Activated CD4-positive, alpha-beta T cell treated with anti-CD3 and anti-CD28 coated beads for 36 hours (primary cell): ENCODE measurements at regions of chr20 and their contacts with region 1.

Region 1: GRCh38 chr20:43691928-43692524 is 25.1 kb downstream of the MYBL2 start:
- DNase-seq: peak; percentile 81
- ATAC-seq: peak; percentile 85
- H3K4me3 Mint-ChIP-seq: no peak overlapping the region
- H3K27ac Mint-ChIP-seq: no peak overlapping the region
- H3K4me1 Mint-ChIP-seq: peaks cover 9% of the 10 kb centered on the region
- H3K27me3 Mint-ChIP-seq: no peaks in the 10 kb centered on the region

Region 2: DNA sequence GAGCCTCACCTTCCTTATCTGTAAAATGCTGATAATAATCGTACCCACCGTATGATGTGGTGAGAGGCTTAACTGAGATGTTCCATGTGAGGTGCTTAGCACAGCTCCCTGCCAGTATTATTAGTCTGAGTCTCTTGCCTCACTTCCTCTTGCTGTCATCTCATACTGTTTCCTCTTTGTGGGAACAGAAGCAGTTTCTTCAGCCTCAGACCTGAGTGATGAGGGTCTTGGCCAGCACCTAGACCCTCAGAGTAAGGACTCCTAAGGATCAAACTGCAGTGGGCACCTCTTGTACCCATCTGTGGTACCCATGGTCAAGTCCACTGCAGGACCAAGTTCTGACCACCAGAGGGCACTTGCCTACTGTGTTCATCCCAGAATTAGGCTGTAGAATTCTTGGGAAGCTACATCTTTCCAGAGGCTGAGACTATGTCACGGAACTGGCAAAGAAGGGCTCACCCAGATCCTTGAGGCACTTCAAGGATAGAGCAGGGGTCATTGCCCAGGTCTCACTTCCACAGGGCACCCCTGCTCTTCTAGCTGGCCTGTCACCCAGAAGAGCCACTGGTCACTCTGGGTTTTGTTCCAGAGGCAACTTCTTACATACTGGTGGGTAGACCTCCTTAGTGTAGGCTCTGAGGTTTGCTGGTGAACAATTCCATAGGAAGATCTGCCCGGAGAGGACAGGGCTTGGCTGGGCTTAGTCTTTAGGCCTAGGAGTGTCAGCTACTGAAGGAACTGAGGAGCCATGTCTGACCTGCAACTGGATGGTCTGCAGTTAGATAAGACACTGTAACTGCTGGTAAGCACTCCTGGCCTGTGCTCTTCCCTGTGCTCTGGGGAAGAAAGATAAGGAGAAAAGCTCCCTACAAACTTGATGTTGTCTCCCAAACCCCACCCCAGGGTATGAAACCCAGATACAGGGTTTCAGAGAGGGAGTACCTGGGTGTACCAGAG is 153.8 kb before region 1 on chr20:
- CTCF ChIA-PET with region 1: interaction called, 13 read pairs
- POLR2A ChIA-PET with region 1: no interaction called
- intact Hi-C with region 1: loop called (anchors 1 to 5 kb)
- DNase-seq: peak; percentile 70
- ATAC-seq: peak; percentile 47
- H3K4me3 Mint-ChIP-seq: no peak overlapping the region
- H3K27ac Mint-ChIP-seq: no peak overlapping the region
- H3K4me1 Mint-ChIP-seq: no peaks in the 10 kb centered on the region
- H3K27me3 Mint-ChIP-seq: no peaks in the 10 kb centered on the region